Naive thymus-derived CD4-positive, alpha-beta T cell (primary cell): ENCODE measurements at regions of chr4 and their contacts with region 1.

Region 1: DNA sequence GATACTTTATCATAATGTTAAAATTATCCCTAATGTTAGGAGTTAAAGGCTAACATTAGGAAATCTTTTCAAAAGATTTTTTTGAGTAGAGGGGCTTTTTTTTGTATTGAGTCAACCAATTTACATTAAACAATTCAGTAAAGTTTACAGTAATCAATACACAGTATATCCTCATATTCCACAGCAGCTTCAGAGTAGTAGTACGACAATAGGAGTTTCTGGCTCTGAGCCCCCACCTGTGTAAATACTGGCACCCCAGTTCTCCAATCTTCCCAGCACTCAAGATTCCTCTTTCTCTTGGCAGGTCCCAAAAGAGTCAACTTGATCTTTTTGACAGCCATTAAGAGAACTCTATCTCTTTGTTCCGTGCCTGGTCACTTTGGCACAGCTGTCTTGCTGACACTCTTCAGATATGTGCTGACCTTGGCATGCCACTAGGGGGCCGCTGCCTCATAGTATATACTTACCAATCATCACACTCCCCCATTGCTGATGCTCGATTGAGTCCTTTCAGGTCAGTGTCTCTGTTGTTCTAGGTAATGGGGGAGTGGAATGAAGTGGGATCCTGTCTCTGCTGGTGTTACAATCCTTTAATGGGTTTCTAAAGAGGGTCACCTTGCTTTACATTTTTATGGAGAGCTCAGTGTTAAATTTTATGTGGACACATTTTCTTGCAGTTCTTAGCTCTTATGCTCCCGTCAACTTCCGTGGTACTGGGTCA is 19.5 kb upstream of the CCNI start:
- DNase-seq: peak; percentile 46 to 67 (median 59)
- ATAC-seq: peak; percentile 98
- H3K4me3 ChIP-seq: no peak overlapping the region
- H3K4me3 Mint-ChIP-seq: no peak overlapping the region
- H3K27ac ChIP-seq: no peak overlapping the region
- H3K27ac Mint-ChIP-seq: no peak overlapping the region
- H3K4me1 ChIP-seq: peaks cover 0 to 2% of the 10 kb centered on the region in 2 donors
- H3K4me1 Mint-ChIP-seq: peaks cover 8 to 20% (median 16%) of the 10 kb centered on the region in 7 donors
- H3K27me3 ChIP-seq: no peaks in the 10 kb centered on the region
- H3K27me3 Mint-ChIP-seq: no peaks in the 10 kb centered on the region

Region 2: GRCh38 chr4:76430519-76431388 is 664.5 kb before region 1 on chr4:
- CTCF ChIA-PET with region 1: no interaction called
- POLR2A ChIA-PET with region 1: no interaction called
- intact Hi-C with region 1: loop called in 1 of 2 experiments (anchors 1 kb)
- DNase-seq: peak in 3 of 9 donors; percentile 17 to 32 (median 18)
- ATAC-seq: no peak
- H3K4me3 ChIP-seq: no peak overlapping the region
- H3K4me3 Mint-ChIP-seq: no peak overlapping the region
- H3K27ac ChIP-seq: no peak overlapping the region
- H3K27ac Mint-ChIP-seq: no peak overlapping the region
- H3K4me1 ChIP-seq: no peaks in the 10 kb centered on the region
- H3K4me1 Mint-ChIP-seq: peaks cover 0 to 4% (median 0%) of the 10 kb centered on the region in 7 donors
- H3K27me3 ChIP-seq: no peaks in the 10 kb centered on the region
- H3K27me3 Mint-ChIP-seq: peaks cover 20 to 37% (median 22%) of the 10 kb centered on the region in 5 donors

Region 3: GRCh38 chr4:77052352-77052751 is 42.9 kb before region 1 on chr4:
- CTCF ChIA-PET with region 1: interaction called, 3 read pairs
- POLR2A ChIA-PET with region 1: no interaction called
- intact Hi-C with region 1: loop called (anchors 1 kb)
- DNase-seq: peak in 7 of 9 donors; percentile 18 to 59 (median 42)
- ATAC-seq: peak; percentile 74
- H3K4me3 ChIP-seq: no peak overlapping the region
- H3K4me3 Mint-ChIP-seq: no peak overlapping the region
- H3K27ac ChIP-seq: no peak overlapping the region
- H3K27ac Mint-ChIP-seq: peak overlapping the region in 6 of 9 donors; percentile 14 to 83 (median 70)
- H3K4me1 ChIP-seq: no peaks in the 10 kb centered on the region
- H3K4me1 Mint-ChIP-seq: peaks cover 0 to 19% (median 9%) of the 10 kb centered on the region in 7 donors
- H3K27me3 ChIP-seq: no peaks in the 10 kb centered on the region
- H3K27me3 Mint-ChIP-seq: no peaks in the 10 kb centered on the region

Region 4: GRCh38 chr4:77209936-77210335 is 114.7 kb after region 1 on chr4:
- CTCF ChIA-PET with region 1: interaction called, 13 read pairs
- POLR2A ChIA-PET with region 1: interaction called, 12 read pairs
- intact Hi-C with region 1: no loop called
- DNase-seq: no peak
- ATAC-seq: no peak
- H3K4me3 ChIP-seq: no peak overlapping the region
- H3K4me3 Mint-ChIP-seq: no peak overlapping the region
- H3K27ac ChIP-seq: no peak overlapping the region
- H3K27ac Mint-ChIP-seq: no peak overlapping the region
- H3K4me1 ChIP-seq: no peaks in the 10 kb centered on the region
- H3K4me1 Mint-ChIP-seq: no peaks in the 10 kb centered on the region
- H3K27me3 ChIP-seq: no peaks in the 10 kb centered on the region
- H3K27me3 Mint-ChIP-seq: peaks cover 0 to 24% (median 5%) of the 10 kb centered on the region in 5 donors

Region 5: DNA sequence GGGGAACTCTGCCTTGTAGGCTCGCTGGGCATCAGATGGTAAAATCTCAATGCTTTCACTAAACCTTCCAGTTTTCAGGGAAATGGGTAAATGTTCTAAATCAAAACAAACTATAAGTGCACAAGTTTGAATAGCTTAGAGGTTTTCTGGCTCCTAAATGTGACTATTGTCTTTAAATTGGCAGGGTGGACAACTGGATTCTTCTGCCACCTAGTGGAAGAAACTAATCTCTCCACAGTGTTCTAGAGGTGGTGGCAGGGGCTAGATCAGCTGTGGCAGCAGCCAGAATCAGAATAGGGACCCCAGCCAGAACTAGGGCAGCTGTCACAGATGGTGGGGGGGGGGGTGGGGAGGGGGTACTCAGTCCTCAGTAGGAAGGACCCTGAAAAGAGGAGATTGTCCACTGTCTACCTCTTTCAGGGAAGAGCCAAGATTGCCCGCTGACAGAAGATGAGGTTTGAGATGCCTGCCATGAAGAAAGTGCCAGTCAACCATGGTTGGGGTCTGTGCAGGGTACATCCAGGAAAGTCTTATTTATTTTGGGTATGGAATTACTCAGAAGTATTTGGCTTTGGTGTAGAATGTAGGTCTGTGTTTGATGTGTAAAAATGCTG is 263.2 kb after region 1 on chr4:
- CTCF ChIA-PET with region 1: interaction called, 3 read pairs
- POLR2A ChIA-PET with region 1: no interaction called
- intact Hi-C with region 1: loop called (anchors 2 to 5 kb)
- DNase-seq: peak in 4 of 9 donors; percentile 2 to 25 (median 16)
- ATAC-seq: no peak
- H3K4me3 ChIP-seq: no peak overlapping the region
- H3K4me3 Mint-ChIP-seq: no peak overlapping the region
- H3K27ac ChIP-seq: no peak overlapping the region
- H3K27ac Mint-ChIP-seq: no peak overlapping the region
- H3K4me1 ChIP-seq: no peaks in the 10 kb centered on the region
- H3K4me1 Mint-ChIP-seq: no peaks in the 10 kb centered on the region
- H3K27me3 ChIP-seq: no peaks in the 10 kb centered on the region
- H3K27me3 Mint-ChIP-seq: peaks cover 0 to 10% (median 0%) of the 10 kb centered on the region in 5 donors